ENCODE measurements at regions of chr22 and their contacts with region 1.

Region 1: DNA sequence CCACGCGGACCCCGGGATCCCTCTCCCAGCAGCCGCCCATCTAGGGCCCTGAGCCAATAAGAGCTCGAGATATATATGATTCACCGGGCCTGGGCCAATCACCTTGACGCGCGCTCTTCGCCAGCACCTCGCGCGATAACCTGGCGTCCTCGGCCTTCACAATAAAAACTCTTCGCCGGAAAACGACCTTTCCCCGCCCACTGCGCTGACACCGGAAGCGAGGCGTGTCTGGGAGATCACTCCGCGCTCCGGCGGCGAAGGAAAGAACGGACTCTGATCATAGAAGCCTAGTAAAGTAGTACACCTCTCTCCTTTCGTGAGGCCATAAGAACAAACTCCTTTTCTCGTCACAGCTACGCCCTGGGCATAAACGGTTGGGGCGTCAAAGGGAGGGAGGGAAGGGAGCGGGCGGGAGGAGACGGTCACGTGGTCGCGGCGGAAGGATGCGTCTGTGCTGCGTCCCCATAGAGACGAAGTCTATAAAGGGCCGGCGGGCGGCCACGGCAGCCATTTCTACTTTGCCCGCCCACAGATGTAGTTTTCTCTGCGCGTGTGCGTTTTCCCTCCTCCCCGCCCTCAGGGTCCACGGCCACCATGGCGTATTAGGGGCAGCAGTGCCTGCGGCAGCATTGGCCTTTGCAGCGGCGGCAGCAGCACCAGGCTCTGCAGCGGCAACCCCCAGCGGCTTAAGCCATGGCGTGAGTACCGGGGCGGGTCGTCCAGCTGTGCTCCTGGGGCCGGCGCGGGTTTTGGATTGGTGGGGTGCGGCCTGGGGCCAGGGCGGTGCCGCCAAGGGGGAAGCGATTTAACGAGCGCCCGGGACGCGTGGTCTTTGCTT is at the start of gene ATF4:
- DNase-seq: peak; percentile 98
- H3K4me3 ChIP-seq: peak within 1 kb of the TSS; percentile 97
- H3K27ac ChIP-seq: peak within 1 kb of the TSS; percentile 93
- H3K4me1 ChIP-seq: peaks cover 31% of the 10 kb centered on the region
- H3K27me3 ChIP-seq: no peaks in the 10 kb centered on the region
- CTCF ChIP-seq: no peak
- total RNA-seq, gene ATF4: 488 and 588 TPM in 2 replicates

Region 2: GRCh38 chr22:38755911-38756532 is 764.3 kb before region 1 on chr22 and contains the start of gene SUN2:
- CTCF ChIA-PET with region 1: no interaction called
- POLR2A ChIA-PET with region 1: no interaction called
- intact Hi-C with region 1: loop called (anchors 5 kb)
- DNase-seq: peak; percentile 71 to 90
- H3K4me3 ChIP-seq: peak within 1 kb of the TSS; percentile 89
- H3K27ac ChIP-seq: peak within 1 kb of the TSS; percentile 87
- H3K4me1 ChIP-seq: peaks cover 55% of the 10 kb centered on the region
- H3K27me3 ChIP-seq: no peaks in the 10 kb centered on the region
- CTCF ChIP-seq: no peak
- total RNA-seq, gene SUN2: 169 and 220 TPM in 2 replicates

Region 3: DNA sequence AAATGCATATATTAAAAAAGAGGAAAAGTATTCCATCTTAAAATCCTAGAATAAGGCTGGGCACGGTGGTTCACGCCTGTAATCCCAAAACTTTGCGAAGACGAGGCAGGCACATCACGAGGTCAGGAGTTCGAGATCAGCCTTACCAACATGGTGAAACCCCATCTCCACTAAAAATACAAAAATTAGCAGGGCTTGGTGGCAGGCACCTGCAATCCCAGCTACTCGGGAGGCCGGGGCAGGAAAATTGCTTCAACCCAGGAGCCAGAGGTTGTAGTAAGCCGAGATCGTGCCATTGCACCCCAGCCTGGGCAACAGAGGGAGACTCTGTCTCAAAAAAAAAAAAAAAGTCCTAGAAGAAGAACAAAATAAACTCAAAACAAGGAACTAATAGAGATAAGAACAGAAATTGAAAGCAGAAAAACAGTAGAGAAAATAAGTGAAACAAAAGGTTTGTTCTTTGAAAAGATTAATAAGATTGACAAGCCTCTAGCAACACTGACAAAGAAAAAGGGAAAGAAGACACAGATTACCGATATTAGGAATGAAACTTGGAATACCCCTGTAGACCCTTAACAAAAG is 322.8 kb before region 1 on chr22:
- CTCF ChIA-PET with region 1: interaction called, 4 read pairs
- POLR2A ChIA-PET with region 1: interaction called, 13 read pairs
- intact Hi-C with region 1: no loop called
- DNase-seq: no peak
- H3K4me3 ChIP-seq: no peak overlapping the region
- H3K27ac ChIP-seq: no peak overlapping the region
- H3K4me1 ChIP-seq: no peaks in the 10 kb centered on the region
- H3K27me3 ChIP-seq: no peaks in the 10 kb centered on the region
- CTCF ChIP-seq: no peak

Region 4: DNA sequence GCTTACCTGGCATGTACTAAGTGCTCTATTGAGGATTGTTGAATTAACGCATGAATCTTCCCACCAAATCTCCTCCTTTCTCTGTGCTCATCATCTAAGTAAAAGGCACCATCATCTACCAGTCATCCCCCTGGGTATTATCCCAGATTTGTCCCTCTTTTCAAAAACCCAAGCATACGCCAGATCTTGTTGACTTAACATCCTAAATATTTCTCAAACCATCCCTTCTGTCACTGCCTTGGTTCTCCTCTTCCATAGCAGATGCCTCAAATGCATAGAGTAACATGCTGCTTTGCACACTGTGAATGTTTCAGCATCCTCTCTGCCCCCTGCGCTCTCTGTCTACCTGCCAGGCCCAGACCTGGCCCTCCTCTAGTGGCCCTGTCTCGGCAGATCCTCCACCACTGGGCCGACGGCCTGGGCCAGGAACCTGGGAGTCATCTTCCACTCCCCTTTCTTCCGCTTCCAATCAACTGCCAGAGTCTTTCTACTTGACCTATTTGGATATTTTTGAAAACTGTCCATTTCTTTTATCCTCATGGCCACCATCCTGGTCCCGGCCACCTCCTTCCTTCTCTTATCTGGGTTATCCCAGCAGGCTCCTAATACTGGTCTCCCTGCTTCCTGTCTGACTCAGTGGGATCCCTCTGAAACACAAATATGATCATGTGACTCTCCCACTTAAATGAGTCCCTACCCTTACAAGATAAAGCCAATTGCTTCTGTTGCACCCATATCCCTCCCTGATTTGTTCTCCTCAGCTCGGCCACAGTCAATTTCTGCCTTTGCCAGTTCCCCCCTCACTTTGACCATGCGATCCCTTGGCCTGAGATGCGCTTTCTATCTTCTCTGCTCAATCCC is 124.1 kb before region 1 on chr22:
- CTCF ChIA-PET with region 1: no interaction called
- POLR2A ChIA-PET with region 1: interaction called, 3 read pairs
- intact Hi-C with region 1: loop called (anchors 2 kb)
- DNase-seq: peak in 1 of 2 experiments; percentile 21
- H3K4me3 ChIP-seq: no peak overlapping the region
- H3K27ac ChIP-seq: no peak overlapping the region
- H3K4me1 ChIP-seq: peaks cover 6% of the 10 kb centered on the region
- H3K27me3 ChIP-seq: no peaks in the 10 kb centered on the region
- CTCF ChIP-seq: no peak

Region 5: GRCh38 chr22:39502109-39502788 is 18.0 kb before region 1 on chr22 and contains the start of gene MIEF1:
- CTCF ChIA-PET with region 1: interaction called, 7 read pairs
- POLR2A ChIA-PET with region 1: interaction called, 8 read pairs
- intact Hi-C with region 1: loop called (anchors 2 kb)
- DNase-seq: peak; percentile 94 to 97
- H3K4me3 ChIP-seq: peak within 1 kb of the TSS; percentile 92
- H3K27ac ChIP-seq: peak within 1 kb of the TSS; percentile 20; the same call in 1 of the 2 replicates
- H3K4me1 ChIP-seq: peaks cover 28% of the 10 kb centered on the region
- H3K27me3 ChIP-seq: no peaks in the 10 kb centered on the region
- CTCF ChIP-seq: no peak
- total RNA-seq, gene MIEF1: 36.9 TPM in 2 replicates

Region 6: DNA sequence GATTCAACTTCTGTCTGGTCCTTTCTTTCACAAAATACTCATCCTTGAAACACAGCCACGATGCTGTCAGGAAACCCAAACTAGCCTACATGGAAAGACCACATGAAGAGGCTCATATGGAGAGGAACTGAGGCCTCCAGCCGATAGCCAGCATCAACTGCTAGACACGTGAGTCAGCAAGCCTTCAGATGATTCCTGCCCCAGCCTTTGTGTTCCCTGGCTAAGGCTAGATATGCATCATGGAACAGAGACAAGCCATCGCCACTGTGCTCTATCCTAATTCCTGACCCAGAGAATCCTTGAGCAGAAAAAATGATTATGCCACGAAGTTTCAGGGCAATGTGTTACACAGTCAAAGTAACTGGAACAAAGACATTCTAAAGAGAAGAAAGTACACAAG is 297.8 kb after region 1 on chr22:
- CTCF ChIA-PET with region 1: no interaction called
- POLR2A ChIA-PET with region 1: no interaction called
- intact Hi-C with region 1: no loop called
- DNase-seq: no peak
- H3K4me3 ChIP-seq: no peak overlapping the region
- H3K27ac ChIP-seq: no peak overlapping the region
- H3K4me1 ChIP-seq: peaks cover 9% of the 10 kb centered on the region
- H3K27me3 ChIP-seq: peaks cover 5% of the 10 kb centered on the region; the same call in 1 of the 2 replicates
- CTCF ChIP-seq: no peak

Measured in PC-9 (cell line).